Mammary epithelial cell (primary cell): ENCODE measurements at regions of chr3 and their contacts with region 1.

Region 1: GRCh38 chr3:32890420-32891276 is 60.8 kb upstream of the CCR4 start:
- DNase-seq: no peak
- H3K4me3 ChIP-seq: no peak overlapping the region
- H3K27ac ChIP-seq: no peak overlapping the region
- H3K4me1 ChIP-seq: no peaks in the 10 kb centered on the region
- H3K27me3 ChIP-seq: peaks cover 3% of the 10 kb centered on the region
- CTCF ChIP-seq: no peak

Region 2: DNA sequence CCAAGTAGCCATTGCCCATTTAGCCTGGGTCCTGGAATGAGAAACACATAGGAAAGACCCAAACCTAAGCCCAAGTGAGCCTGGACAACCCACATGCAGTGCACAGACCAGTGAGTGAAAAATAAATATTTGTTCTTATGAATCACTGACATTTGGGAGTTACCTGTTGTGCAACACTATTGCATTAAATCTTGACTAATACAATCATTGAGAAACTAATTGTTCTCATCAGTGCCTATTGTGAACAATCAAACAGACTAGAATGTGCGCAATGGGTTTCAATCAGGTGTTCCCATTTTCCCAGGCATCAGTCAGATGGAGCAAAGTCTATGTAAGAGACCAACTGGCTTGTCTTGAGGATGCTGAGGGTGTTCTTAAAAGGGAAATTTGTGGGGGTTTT is 260.4 kb before region 1 on chr3:
- CTCF ChIA-PET with region 1: no interaction called
- dilution Hi-C with region 1: no loop called
- in situ Hi-C with region 1: no loop called
- intact Hi-C with region 1: no loop called
- DNase-seq: peak; percentile 80
- H3K4me3 ChIP-seq: no peak overlapping the region
- H3K27ac ChIP-seq: no peak overlapping the region
- H3K4me1 ChIP-seq: no peaks in the 10 kb centered on the region
- H3K27me3 ChIP-seq: no peaks in the 10 kb centered on the region
- CTCF ChIP-seq: no peak

Region 3: GRCh38 chr3:32856355-32856889 is 34.2 kb before region 1 on chr3:
- CTCF ChIA-PET with region 1: no interaction called
- dilution Hi-C with region 1: loop called (anchors 5 kb)
- in situ Hi-C with region 1: no loop called
- intact Hi-C with region 1: no loop called
- DNase-seq: no peak
- H3K4me3 ChIP-seq: no peak overlapping the region
- H3K27ac ChIP-seq: no peak overlapping the region
- H3K4me1 ChIP-seq: no peaks in the 10 kb centered on the region
- H3K27me3 ChIP-seq: no peaks in the 10 kb centered on the region
- CTCF ChIP-seq: no peak